Left cardiac atrium (tissue), 4 donors: ENCODE measurements at regions of chr4 and their contacts with region 1.

Region 1: GRCh38 chr4:184156163-184156920 is 61.3 kb downstream of the ENPP6 start:
- DNase-seq: no peak
- ATAC-seq: peak; percentile 59 to 61

Region 2: GRCh38 chr4:184100297-184100885 is 56.0 kb before region 1 on chr4:
- intact Hi-C with region 1: loop called in 1 of 2 experiments (anchors 5 kb)
- DNase-seq: peak; percentile 37
- ATAC-seq: peak; percentile 40 to 85